ENCODE measurements at regions of chr6 and their contacts with region 1.

Region 1: GRCh38 chr6:157339432-157339831 is 16.1 kb upstream of the TMEM242 start:
- DNase-seq: no peak
- ATAC-seq: peak; percentile 75; the same call in 1 of the 2 replicates
- H3K4me3 ChIP-seq: no peak overlapping the region
- H3K27ac ChIP-seq: no peak overlapping the region
- H3K4me1 ChIP-seq: no peaks in the 10 kb centered on the region
- H3K27me3 ChIP-seq: no peaks in the 10 kb centered on the region
- CTCF ChIP-seq: peak; percentile 61

Region 2: DNA sequence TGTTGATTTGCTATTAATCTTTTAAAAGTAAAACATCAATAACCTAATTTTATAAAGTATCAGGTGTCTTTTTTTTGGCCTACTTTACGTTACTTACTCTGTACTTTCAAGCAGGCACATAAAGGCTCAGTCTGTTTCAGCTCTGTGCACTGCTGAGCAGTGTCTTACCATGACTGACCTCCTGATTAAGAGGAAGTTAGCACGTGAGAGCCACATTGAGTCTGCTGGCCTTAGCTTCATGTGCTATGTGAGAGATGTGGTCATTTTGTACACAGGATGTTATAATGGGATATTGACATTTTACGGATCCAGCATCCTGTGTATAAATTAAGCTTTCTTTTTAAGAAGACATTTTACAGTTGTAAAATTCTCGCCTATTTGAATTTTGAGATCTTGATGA is 530.4 kb before region 1 on chr6:
- CTCF ChIA-PET with region 1: no interaction called
- POLR2A ChIA-PET with region 1: interaction called, 13 read pairs
- in situ Hi-C with region 1: no loop called
- intact Hi-C with region 1: no loop called
- DNase-seq: no peak
- ATAC-seq: no peak
- H3K4me3 ChIP-seq: no peak overlapping the region
- H3K27ac ChIP-seq: no peak overlapping the region
- H3K4me1 ChIP-seq: peaks cover 17% of the 10 kb centered on the region; the same call in 1 of the 2 replicates
- H3K27me3 ChIP-seq: no peaks in the 10 kb centered on the region
- CTCF ChIP-seq: no peak

Measured in Panc1 (cell line).